Activated naive CD4-positive, alpha-beta T cell treated with anti-CD3 and anti-CD28 coated beads for 36 hours (primary cell): ENCODE measurements at regions of chr6 and their contacts with region 1.

Region 1: GRCh38 chr6:33620856-33621710 is at the start of gene ITPR3:
- DNase-seq: peak; percentile 77
- H3K4me3 Mint-ChIP-seq: peak within 1 kb of the TSS; percentile 89
- H3K27ac Mint-ChIP-seq: peak within 1 kb of the TSS; percentile 78
- H3K4me1 Mint-ChIP-seq: peaks cover 53% of the 10 kb centered on the region
- H3K27me3 Mint-ChIP-seq: no peaks in the 10 kb centered on the region
- total RNA-seq, gene ITPR3: 34.8 to 35.1 TPM

Region 2: GRCh38 chr6:33633462-33634158 is 12.5 kb after region 1 on chr6:
- CTCF ChIA-PET with region 1: interaction called, 6 read pairs
- intact Hi-C with region 1: loop called (anchors 1 kb)
- DNase-seq: peak; percentile 40
- H3K4me3 Mint-ChIP-seq: peak overlapping the region; percentile 74
- H3K27ac Mint-ChIP-seq: peak overlapping the region; percentile 27
- H3K4me1 Mint-ChIP-seq: peaks cover 61% of the 10 kb centered on the region
- H3K27me3 Mint-ChIP-seq: no peaks in the 10 kb centered on the region

Region 3: GRCh38 chr6:33700391-33701050 is 79.4 kb after region 1 on chr6:
- CTCF ChIA-PET with region 1: no interaction called
- intact Hi-C with region 1: loop called (anchors 2 kb)
- DNase-seq: peak; percentile 89
- H3K4me3 Mint-ChIP-seq: no peak overlapping the region
- H3K27ac Mint-ChIP-seq: peak overlapping the region; percentile 26
- H3K4me1 Mint-ChIP-seq: peaks cover 49% of the 10 kb centered on the region
- H3K27me3 Mint-ChIP-seq: no peaks in the 10 kb centered on the region

Region 4: DNA sequence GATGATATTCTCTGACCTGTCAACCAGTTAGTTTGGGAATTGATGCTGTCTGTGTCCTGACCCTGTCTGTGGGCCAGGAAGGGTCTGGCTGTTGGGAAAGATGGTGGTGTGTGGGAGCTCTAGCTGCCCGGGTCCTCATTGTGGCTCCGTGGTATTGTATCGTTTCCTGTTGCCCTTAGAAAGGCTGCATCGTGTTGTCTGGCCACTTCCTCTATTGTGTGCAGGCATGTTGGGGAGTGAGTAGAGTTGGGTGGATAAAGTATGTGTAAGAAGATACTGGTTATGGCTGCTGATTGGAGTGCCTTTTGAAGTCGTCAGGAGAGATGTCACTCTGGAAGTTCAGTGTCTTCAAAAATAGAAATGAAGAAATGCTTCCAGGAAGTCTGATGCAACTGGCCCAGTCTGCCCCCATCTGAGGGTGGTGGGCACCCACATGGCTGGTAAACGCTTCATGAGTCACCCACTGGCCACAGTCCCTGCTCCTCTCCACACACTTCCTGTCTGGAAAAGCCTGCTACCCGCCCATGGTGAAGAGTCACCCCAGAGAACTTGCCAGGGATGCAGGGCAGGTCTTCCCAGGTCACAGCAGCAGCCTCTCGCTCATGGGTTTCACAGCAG is 1749.2 kb after region 1 on chr6:
- CTCF ChIA-PET with region 1: no interaction called
- intact Hi-C with region 1: no loop called
- DNase-seq: peak; percentile 54
- H3K4me3 Mint-ChIP-seq: peak overlapping the region; percentile 36
- H3K27ac Mint-ChIP-seq: peak overlapping the region; percentile 85
- H3K4me1 Mint-ChIP-seq: peaks cover 49% of the 10 kb centered on the region
- H3K27me3 Mint-ChIP-seq: no peaks in the 10 kb centered on the region